Activated T-helper 1 cell treated with anti-CD3 and anti-CD28 coated beads, Interleukin-12 subunit alpha, Interleukin-12 subunit beta, Interleukin-2, Interleukin-4 antibody, amounts not matched to agents 30 ng/mL and 10 ng/mL and 1 ng/mL, durations not matched to agents 14 hours and 24 hours and 36 hours (primary cell): ENCODE measurements at regions of chr19 and their contacts with region 1.

Region 1: DNA sequence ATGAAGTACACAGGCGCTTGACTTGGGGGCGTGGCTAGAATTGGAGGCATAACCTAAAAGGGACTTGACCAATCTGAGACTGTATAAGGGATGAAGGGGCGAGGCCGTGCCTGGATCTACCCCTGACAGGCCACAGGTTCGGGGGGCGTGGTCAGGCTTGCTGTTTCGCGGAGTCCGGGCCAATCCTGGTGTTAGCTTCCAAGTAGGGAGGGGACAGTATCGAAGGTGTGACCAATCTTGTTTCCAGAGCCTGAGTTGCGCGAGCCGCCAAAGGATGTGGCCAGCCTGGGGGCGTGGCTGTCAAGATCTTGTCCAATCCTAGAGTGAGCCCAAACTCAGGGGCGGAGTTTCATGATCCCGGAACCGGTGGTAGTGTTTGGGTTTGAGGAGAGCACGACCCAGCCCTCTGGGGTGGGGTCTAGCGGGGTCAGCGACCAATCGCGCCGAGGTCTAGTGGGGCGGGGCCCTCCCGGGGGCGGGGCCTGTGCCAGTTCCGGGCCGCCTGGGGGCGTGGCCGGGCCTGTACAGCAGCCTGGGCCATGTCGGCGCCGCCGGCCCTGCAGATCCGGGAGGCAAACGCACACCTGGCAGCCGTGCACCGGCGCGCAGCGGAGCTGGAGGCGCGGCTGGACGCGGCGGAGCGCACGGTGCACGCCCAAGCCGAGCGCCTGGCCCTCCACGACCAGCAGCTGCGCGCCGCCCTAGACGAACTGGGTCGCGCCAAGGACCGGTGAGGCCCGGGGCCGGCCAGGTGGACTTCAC is at the start of gene VMAC:
- DNase-seq: peak; percentile 100
- H3K4me3 Mint-ChIP-seq: peak within 1 kb of the TSS; percentile 99
- H3K27ac Mint-ChIP-seq: peak within 1 kb of the TSS; percentile 97
- H3K4me1 Mint-ChIP-seq: peaks cover 30% of the 10 kb centered on the region
- H3K27me3 Mint-ChIP-seq: no peaks in the 10 kb centered on the region
- total RNA-seq, gene VMAC: 3.5 and 4.2 TPM in 2 replicates

Region 2: GRCh38 chr19:5622463-5623396 is 281.8 kb before region 1 on chr19 and contains the starts of genes SAFB and SAFB2:
- intact Hi-C with region 1: loop called (anchors 5 kb)
- DNase-seq: peak; percentile 100
- H3K4me3 Mint-ChIP-seq: peak within 1 kb of the TSS; percentile 100
- H3K27ac Mint-ChIP-seq: peak within 1 kb of the TSS; percentile 100
- H3K4me1 Mint-ChIP-seq: peaks cover 63% of the 10 kb centered on the region
- H3K27me3 Mint-ChIP-seq: peaks cover 3% of the 10 kb centered on the region
- total RNA-seq, gene SAFB: 143 and 146 TPM in 2 replicates
- total RNA-seq, gene SAFB2: 104 and 106 TPM in 2 replicates

Region 3: GRCh38 chr19:5719961-5720790 is 184.4 kb before region 1 on chr19 and contains the starts of genes CATSPERD and LONP1:
- intact Hi-C with region 1: loop called (anchors 1 kb)
- DNase-seq: peak; percentile 98
- H3K4me3 Mint-ChIP-seq: peak within 1 kb of the TSS; percentile 98
- H3K27ac Mint-ChIP-seq: peak within 1 kb of the TSS; percentile 96
- H3K4me1 Mint-ChIP-seq: peaks cover 25% of the 10 kb centered on the region
- H3K27me3 Mint-ChIP-seq: peaks cover 6% of the 10 kb centered on the region
- total RNA-seq, gene CATSPERD: not detected in 2 replicates
- total RNA-seq, gene LONP1: 180 and 186 TPM in 2 replicates

Region 4: DNA sequence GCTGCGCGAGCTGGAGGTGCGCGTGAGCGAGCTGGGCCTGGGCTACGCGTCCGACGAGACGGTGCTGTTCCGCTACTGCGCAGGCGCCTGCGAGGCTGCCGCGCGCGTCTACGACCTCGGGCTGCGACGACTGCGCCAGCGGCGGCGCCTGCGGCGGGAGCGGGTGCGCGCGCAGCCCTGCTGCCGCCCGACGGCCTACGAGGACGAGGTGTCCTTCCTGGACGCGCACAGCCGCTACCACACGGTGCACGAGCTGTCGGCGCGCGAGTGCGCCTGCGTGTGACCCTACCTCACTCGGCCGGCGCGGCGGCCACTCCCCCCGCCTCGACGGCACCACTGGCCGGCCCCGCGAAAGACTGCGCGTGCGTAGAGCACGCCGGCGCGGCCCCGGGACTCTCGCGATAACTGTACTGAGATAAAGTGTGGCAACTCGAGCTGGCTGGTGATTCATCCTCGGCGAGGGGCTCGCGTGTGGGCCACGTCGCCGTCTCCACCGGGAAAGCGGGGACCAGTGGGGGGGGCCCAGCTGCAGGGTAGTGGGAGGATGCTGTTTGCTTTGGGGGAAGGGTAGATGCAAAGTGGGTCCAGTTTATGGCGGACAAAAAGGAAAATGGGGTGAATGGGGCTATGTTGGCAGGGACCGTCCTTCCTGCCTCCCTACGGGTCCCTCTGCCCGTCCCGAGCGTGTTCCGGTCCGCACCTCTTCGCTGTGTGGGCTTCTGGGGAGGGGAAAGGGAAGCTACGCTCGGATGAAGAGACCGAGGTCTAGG is 76.5 kb before region 1 on chr19:
- intact Hi-C with region 1: loop called (anchors 1 kb)
- DNase-seq: peak; percentile 96
- H3K4me3 Mint-ChIP-seq: peak overlapping the region; percentile 99
- H3K27ac Mint-ChIP-seq: peak overlapping the region; percentile 99
- H3K4me1 Mint-ChIP-seq: peaks cover 13% of the 10 kb centered on the region
- H3K27me3 Mint-ChIP-seq: peaks cover 2% of the 10 kb centered on the region

Region 5: GRCh38 chr19:5880604-5881078 is 23.9 kb before region 1 on chr19:
- intact Hi-C with region 1: no loop called
- DNase-seq: no peak
- H3K4me3 Mint-ChIP-seq: no peak overlapping the region
- H3K27ac Mint-ChIP-seq: no peak overlapping the region
- H3K4me1 Mint-ChIP-seq: no peaks in the 10 kb centered on the region
- H3K27me3 Mint-ChIP-seq: peaks cover 3% of the 10 kb centered on the region

Region 6: DNA sequence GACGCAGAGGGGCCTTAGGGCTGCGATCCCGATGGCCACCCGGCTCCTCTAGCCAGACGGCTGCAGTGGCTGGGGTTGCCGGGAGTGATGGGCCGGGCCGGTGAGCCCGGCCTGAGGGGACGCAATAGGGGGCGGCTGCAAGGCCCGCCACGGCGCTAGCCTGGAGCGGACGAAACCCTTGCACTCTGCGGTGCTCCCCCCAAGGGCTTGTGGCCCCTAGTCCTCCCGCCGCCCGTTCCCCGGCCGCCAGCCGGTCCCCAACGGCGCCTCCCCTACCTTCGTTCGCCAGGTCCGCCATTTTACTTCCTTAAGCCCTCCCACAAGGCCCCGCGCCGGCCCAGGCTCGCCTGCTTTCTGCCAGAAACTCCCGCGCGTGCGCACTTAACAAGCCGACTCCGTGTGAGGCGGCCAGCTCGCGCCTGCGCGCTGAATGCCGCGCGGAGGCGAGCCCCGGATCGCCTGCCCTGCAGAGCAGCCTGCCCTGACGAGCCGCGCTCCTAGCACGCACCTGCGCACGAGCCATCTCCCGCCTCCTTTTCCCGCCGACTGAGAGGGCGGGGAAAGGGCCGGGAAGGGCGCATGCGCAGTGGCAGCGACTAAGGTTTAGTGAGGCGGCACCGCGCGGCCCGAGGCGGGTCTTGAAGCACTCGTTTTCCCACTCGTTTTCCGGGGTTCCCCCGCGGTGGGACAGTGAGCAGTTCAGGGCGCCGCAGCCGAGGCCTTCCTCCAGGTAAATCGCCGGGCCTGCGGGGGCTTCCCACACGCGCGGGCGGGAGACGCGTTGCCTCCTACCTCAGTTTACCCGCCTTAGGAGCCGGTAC is 73.5 kb after region 1 on chr19 and contains the start of gene RANBP3:
- intact Hi-C with region 1: loop called (anchors 1 kb)
- DNase-seq: peak; percentile 100
- H3K4me3 Mint-ChIP-seq: peak within 1 kb of the TSS; percentile 98
- H3K27ac Mint-ChIP-seq: peak within 1 kb of the TSS; percentile 92
- H3K4me1 Mint-ChIP-seq: peaks cover 54% of the 10 kb centered on the region
- H3K27me3 Mint-ChIP-seq: no peaks in the 10 kb centered on the region
- total RNA-seq, gene RANBP3: 122 and 126 TPM in 2 replicates

Region 7: DNA sequence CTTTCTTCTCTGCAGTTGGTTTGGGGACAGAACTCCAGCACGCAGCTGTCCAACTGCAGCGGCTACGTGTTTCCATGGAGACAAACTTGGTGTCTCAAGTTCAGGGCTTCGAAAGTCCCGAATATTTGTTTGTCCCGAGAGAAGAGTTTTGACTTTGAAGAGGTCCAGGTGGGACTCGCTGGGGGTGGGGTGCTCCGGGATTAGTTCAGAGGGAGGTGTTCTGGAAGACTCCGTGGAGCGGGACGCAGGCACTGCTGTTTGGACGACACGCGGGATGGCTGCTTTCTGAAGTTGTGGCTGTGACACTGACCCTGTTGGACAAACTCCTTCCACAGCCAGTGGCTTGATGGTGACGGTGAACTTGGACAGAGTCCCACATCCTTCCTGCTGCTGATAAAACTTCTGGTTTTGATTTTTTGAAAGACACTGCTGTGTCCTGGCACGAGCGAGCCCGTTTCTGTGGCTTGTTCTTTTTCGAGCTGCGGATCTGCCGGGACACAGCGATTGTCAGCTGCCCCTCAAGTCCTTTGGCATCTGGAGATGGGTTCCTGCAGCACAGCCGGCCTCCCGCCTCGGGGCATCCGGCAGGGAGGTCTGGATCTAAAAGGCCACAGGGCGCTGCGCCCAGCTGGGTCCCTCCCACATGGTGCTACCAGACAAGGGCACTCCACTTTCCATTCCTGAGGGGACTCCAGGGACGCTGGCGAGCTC is 89.3 kb after region 1 on chr19:
- intact Hi-C with region 1: no loop called
- DNase-seq: no peak
- H3K4me3 Mint-ChIP-seq: no peak overlapping the region
- H3K27ac Mint-ChIP-seq: no peak overlapping the region
- H3K4me1 Mint-ChIP-seq: peaks cover under 1% of the 10 kb centered on the region
- H3K27me3 Mint-ChIP-seq: no peaks in the 10 kb centered on the region

Region 8: DNA sequence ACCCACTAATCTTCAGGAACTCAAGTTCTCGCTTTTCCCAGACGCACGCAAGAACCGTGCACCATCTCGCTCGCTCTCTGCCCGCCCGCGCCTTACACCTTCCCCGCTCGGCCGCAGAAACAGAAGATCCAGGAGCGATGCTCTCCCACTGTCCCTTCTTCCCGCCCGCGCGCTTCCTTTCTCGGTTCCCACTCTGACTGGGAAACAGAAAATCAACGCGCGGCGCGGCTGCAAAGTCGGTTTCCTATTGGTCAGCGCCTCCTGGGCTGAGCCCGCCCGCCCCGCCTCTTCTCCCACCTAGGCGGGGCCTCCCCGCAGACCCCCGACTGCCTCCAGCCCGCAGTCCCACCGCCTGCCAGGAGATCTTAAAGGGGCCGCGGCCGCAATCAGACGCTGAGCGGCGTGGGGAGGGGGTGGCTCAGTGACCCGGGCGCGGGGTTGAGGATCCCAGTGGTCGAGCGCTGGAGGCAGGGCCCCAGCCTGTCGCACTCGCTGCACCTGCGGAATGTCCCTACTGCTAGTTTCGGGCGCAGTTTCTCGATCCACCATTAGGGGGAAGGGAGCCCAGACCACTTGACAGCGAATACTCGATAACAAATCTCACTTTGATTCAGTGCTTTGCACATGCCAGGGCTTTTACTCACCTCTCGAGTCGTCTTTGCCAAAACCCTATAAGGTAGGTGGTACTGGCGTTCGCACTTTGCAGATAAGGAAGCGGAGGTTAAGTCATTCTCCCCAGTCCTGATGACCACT is 555.7 kb after region 1 on chr19:
- intact Hi-C with region 1: loop called (anchors 1 kb)
- DNase-seq: peak; percentile 95
- H3K4me3 Mint-ChIP-seq: peak overlapping the region; percentile 89
- H3K27ac Mint-ChIP-seq: peak overlapping the region; percentile 84
- H3K4me1 Mint-ChIP-seq: peaks cover 21% of the 10 kb centered on the region
- H3K27me3 Mint-ChIP-seq: peaks cover 4% of the 10 kb centered on the region